ENCODE measurements at regions of chr1 and their contacts with region 1.

Region 1: DNA sequence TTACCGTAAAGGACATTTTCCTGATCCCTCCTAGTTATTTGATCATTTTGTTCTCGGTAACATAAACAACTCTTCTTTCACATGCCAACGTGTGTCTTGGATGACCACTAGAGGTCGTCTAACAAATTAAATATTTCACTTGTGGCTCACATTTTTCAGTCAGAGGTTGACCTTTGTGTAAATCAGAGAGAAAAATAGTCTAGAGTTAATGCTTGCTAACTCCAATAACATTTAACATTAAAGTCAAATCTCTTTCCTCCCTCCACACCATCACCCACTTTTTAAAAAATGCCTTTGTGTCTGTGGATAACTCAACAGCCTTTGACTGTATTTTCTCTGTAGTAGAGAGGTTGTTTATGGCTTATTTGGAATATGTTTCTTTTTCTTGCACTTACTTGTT is 220.5 kb upstream of the B3GALT2 start:
- DNase-seq: peak; percentile 65
- H3K4me3 ChIP-seq: no peak overlapping the region
- H3K27ac ChIP-seq: no peak overlapping the region
- H3K4me1 ChIP-seq: no peaks in the 10 kb centered on the region
- H3K27me3 ChIP-seq: no peaks in the 10 kb centered on the region
- CTCF ChIP-seq: peak; percentile 84

Region 2: DNA sequence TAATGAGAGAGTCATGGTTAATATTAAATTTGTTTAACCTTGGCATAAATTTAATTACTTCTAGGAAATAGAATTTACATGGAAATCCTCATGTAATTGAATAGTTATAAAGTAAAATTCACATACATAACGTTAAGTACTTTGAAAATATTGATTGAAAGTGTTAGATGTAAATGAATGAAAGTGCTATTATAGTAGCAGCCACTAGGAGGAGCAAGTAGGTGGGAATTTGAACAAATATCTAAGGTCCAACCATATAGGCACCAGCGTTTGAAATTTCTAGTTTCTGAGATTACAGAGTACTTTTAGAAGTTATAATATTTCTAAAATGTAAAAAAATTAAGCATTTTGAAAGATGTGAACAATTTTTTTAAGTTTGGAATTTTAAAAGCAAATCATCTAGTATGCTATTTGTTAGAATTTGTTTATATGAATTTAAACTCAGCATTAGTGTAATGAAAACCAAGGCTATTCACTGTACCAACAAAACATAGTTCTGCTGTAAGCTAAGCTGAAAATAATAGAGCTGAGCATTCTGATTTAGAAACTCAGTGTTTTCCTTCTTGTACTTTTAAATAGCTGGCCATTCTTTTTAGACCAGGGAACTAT is 223.8 kb before region 1 on chr1:
- CTCF ChIA-PET with region 1: no interaction called
- POLR2A ChIA-PET with region 1: no interaction called
- intact Hi-C with region 1: loop called (anchors 10 kb)
- DNase-seq: peak; percentile 68
- H3K4me3 ChIP-seq: peak overlapping the region; percentile 4
- H3K27ac ChIP-seq: no peak overlapping the region
- H3K4me1 ChIP-seq: peaks cover 64% of the 10 kb centered on the region
- H3K27me3 ChIP-seq: no peaks in the 10 kb centered on the region
- CTCF ChIP-seq: peak; percentile 88

Region 3: GRCh38 chr1:193754732-193755427 is 348.0 kb after region 1 on chr1:
- CTCF ChIA-PET with region 1: no interaction called
- POLR2A ChIA-PET with region 1: no interaction called
- intact Hi-C with region 1: loop called (anchors 10 kb)
- DNase-seq: peak; percentile 29
- H3K4me3 ChIP-seq: no peak overlapping the region
- H3K27ac ChIP-seq: no peak overlapping the region
- H3K4me1 ChIP-seq: no peaks in the 10 kb centered on the region
- H3K27me3 ChIP-seq: no peaks in the 10 kb centered on the region
- CTCF ChIP-seq: peak; percentile 42; the same call in 1 of the 2 replicates

Measured in A673 (cell line).